Common myeloid progenitor, CD34-positive (primary cell): ENCODE measurements at regions of chr6 and their contacts with region 1.

Region 1: GRCh38 chr6:53348371-53349208 is at the start of gene ELOVL5:
- DNase-seq: peak; percentile 99
- H3K4me3 ChIP-seq: peak within 1 kb of the TSS; percentile 84 to 95 (median 91)
- H3K27ac ChIP-seq: peak within 1 kb of the TSS; percentile 87 to 91
- H3K4me1 ChIP-seq: peaks cover 14 to 28% (median 24%) of the 10 kb centered on the region in 4 experiments
- H3K27me3 ChIP-seq: no peaks in the 10 kb centered on the region

Region 2: GRCh38 chr6:53159558-53159957 is 189.0 kb before region 1 on chr6:
- CTCF ChIA-PET with region 1: no interaction called
- POLR2A ChIA-PET with region 1: no interaction called
- DNase-seq: no peak
- H3K4me3 ChIP-seq: no peak overlapping the region
- H3K27ac ChIP-seq: no peak overlapping the region
- H3K4me1 ChIP-seq: peaks cover 0 to 6% (median 3%) of the 10 kb centered on the region in 4 experiments
- H3K27me3 ChIP-seq: no peaks in the 10 kb centered on the region

Region 3: GRCh38 chr6:53335208-53335994 is 13.2 kb before region 1 on chr6:
- CTCF ChIA-PET with region 1: interaction called, 21 read pairs
- POLR2A ChIA-PET with region 1: interaction called, 6 read pairs
- DNase-seq: peak in 2 of 3 donors; percentile 83 to 85
- H3K4me3 ChIP-seq: peak overlapping the region in 5 of 7 experiments; percentile 2 to 69 (median 44)
- H3K27ac ChIP-seq: peak overlapping the region; percentile 47 to 60
- H3K4me1 ChIP-seq: peaks cover 25 to 43% (median 28%) of the 10 kb centered on the region in 4 experiments
- H3K27me3 ChIP-seq: no peaks in the 10 kb centered on the region

Region 4: DNA sequence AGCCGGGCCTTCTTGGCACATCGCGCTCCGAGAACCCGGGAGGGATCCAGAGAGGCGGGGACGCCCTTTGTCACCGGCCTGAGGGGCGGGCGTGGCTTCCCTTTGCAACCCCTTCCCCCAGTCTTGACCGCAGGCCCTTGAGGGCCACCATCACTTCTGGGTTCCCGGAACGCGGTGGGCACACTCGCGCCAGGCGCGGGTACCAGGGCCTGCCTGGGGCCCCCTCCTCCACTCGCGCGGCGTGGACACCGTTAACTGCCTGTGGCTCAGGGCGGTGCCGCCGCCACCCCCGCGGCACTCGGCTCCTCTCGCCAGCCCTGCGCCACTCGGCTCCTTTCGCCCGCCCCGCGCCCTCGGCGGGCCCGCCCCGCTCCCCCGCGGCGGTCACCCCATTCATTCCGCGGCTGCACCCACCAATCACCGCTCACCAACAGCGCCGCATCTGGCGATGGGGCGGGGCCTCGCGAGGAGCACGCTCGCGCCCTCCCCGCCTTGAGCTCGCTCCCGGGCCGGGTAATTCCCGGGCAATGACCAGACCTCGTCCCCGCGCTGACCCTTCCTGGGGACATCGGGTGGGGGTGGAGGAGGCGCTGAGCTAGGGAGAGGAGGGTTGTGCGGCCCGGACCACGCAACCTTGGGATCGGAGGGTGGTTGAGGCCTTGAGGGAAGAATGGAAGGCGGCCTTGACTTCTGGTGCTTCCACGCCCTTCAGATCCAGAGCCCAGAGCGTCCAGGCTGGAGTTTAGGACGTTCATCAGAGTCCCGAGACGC is 10.7 kb after region 1 on chr6:
- CTCF ChIA-PET with region 1: interaction called, 3 read pairs
- POLR2A ChIA-PET with region 1: interaction called, 16 read pairs
- DNase-seq: peak; percentile 88 to 94 (median 93)
- H3K4me3 ChIP-seq: peak overlapping the region; percentile 46 to 82 (median 68)
- H3K27ac ChIP-seq: peak overlapping the region; percentile 95 to 96
- H3K4me1 ChIP-seq: peaks cover 10 to 39% (median 34%) of the 10 kb centered on the region in 4 experiments
- H3K27me3 ChIP-seq: no peaks in the 10 kb centered on the region

Region 5: GRCh38 chr6:53426667-53427270 is 78.2 kb after region 1 on chr6:
- CTCF ChIA-PET with region 1: no interaction called
- POLR2A ChIA-PET with region 1: no interaction called
- DNase-seq: no peak
- H3K4me3 ChIP-seq: no peak overlapping the region
- H3K27ac ChIP-seq: no peak overlapping the region
- H3K4me1 ChIP-seq: peaks cover 0 to 8% (median 0%) of the 10 kb centered on the region in 4 experiments
- H3K27me3 ChIP-seq: no peaks in the 10 kb centered on the region

Region 6: DNA sequence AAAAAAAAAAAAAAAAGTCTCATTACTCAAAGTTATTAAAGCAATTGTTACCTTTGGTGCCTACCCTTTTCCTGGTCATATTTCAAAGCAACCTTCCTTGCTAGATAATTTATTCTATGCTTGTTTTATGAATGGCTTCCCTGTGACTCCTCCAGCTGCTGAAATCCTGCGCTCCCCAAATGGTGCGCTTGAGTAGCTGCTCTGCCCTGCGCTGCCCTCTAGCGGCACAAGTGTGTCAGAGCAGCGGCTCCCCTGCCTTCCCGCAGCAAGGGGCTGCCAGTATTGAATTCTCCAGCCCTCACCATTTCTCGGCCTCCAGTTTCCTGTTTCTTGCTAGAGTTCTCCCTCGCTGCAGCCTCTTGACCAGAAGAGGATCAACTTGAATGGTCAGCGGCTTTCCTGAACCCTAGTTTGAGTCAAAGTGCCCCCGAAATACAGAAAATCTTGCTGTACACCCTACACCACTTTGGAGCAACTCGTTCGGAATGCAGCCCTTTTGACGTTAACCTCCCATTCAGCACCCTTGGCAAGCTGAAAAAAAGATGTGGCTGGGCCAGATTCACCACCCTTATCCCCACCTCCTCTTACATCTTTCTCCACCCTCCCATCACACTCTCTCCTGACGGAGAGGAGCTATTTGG is 377.3 kb after region 1 on chr6:
- CTCF ChIA-PET with region 1: no interaction called
- POLR2A ChIA-PET with region 1: no interaction called
- DNase-seq: peak; percentile 71 to 85 (median 81)
- H3K4me3 ChIP-seq: no peak overlapping the region
- H3K27ac ChIP-seq: no peak overlapping the region
- H3K4me1 ChIP-seq: peaks cover 0 to 4% (median 2%) of the 10 kb centered on the region in 4 experiments
- H3K27me3 ChIP-seq: no peaks in the 10 kb centered on the region